SK-N-SH (cell line): ENCODE measurements at regions of chr4 and their contacts with region 1.

Region 1: GRCh38 chr4:42371306-42372252 is 25.7 kb upstream of the SHISA3 start:
- DNase-seq: peak; percentile 77
- H3K4me3 ChIP-seq: no peak overlapping the region
- H3K27ac ChIP-seq: peak overlapping the region in 1 of 2 experiments; percentile 44; a peak in 1 of 4 replicates
- H3K4me1 ChIP-seq: peaks cover 0 to under 1% of the 10 kb centered on the region in 2 experiments; a peak in 1 of 4 replicates
- H3K27me3 ChIP-seq: no peaks in the 10 kb centered on the region; the same call in 1 of the 2 replicates
- CTCF ChIP-seq: peak; percentile 79
- EP300 ChIP-seq: no peak
- RAD21 ChIP-seq: peak; percentile 91

Region 2: GRCh38 chr4:42282081-42282901 is 89.3 kb before region 1 on chr4:
- CTCF ChIA-PET with region 1: interaction called, 86 read pairs
- POLR2A ChIA-PET with region 1: no interaction called
- DNase-seq: peak; percentile 81
- H3K4me3 ChIP-seq: peak overlapping the region in 1 of 2 experiments; percentile 12; a peak in 1 of 4 replicates
- H3K27ac ChIP-seq: peak overlapping the region in 1 of 2 experiments; percentile 36; a peak in 1 of 4 replicates
- H3K4me1 ChIP-seq: peaks cover 0 to 13% of the 10 kb centered on the region in 2 experiments; a peak in 3 of 4 replicates
- H3K27me3 ChIP-seq: no peaks in the 10 kb centered on the region
- CTCF ChIP-seq: peak; percentile 80
- EP300 ChIP-seq: no peak
- RAD21 ChIP-seq: peak; percentile 96

Region 3: GRCh38 chr4:42359711-42360110 is 11.9 kb before region 1 on chr4:
- CTCF ChIA-PET with region 1: interaction called, 22 read pairs
- POLR2A ChIA-PET with region 1: no interaction called
- DNase-seq: no peak
- H3K4me3 ChIP-seq: peak overlapping the region; percentile 1 to 17; a peak in 1 of 4 replicates
- H3K27ac ChIP-seq: peak overlapping the region in 1 of 2 experiments; percentile 77; a peak in 2 of 4 replicates
- H3K4me1 ChIP-seq: peaks cover 0 to 8% of the 10 kb centered on the region in 2 experiments; a peak in 2 of 4 replicates
- H3K27me3 ChIP-seq: no peaks in the 10 kb centered on the region
- CTCF ChIP-seq: no peak
- EP300 ChIP-seq: no peak
- RAD21 ChIP-seq: no peak

Region 4: GRCh38 chr4:42396752-42397634 is 25.4 kb after region 1 on chr4 and contains the start of gene SHISA3:
- CTCF ChIA-PET with region 1: interaction called, 25 read pairs
- POLR2A ChIA-PET with region 1: no interaction called
- DNase-seq: peak; percentile 71
- H3K4me3 ChIP-seq: peak within 1 kb of the TSS; percentile 58 to 60
- H3K27ac ChIP-seq: no peak within 1 kb of the TSS
- H3K4me1 ChIP-seq: peaks cover 0 to 21% of the 10 kb centered on the region in 2 experiments; a peak in 2 of 4 replicates
- H3K27me3 ChIP-seq: peaks cover 23% of the 10 kb centered on the region
- CTCF ChIP-seq: no peak
- EP300 ChIP-seq: no peak
- RAD21 ChIP-seq: no peak
- polyA plus RNA-seq, gene SHISA3: 1.1 and 1.6 TPM in 2 replicates

Region 5: GRCh38 chr4:42513748-42514492 is 142.3 kb after region 1 on chr4:
- CTCF ChIA-PET with region 1: interaction called, 129 read pairs
- POLR2A ChIA-PET with region 1: no interaction called
- DNase-seq: no peak
- H3K4me3 ChIP-seq: no peak overlapping the region
- H3K27ac ChIP-seq: no peak overlapping the region; a peak in 1 of 4 replicates
- H3K4me1 ChIP-seq: no peaks in the 10 kb centered on the region; a peak in 1 of 4 replicates
- H3K27me3 ChIP-seq: no peaks in the 10 kb centered on the region
- CTCF ChIP-seq: no peak
- EP300 ChIP-seq: no peak
- RAD21 ChIP-seq: no peak

Region 6: GRCh38 chr4:42533042-42533441 is 161.5 kb after region 1 on chr4:
- CTCF ChIA-PET with region 1: no interaction called
- POLR2A ChIA-PET with region 1: no interaction called
- DNase-seq: no peak
- H3K4me3 ChIP-seq: no peak overlapping the region
- H3K27ac ChIP-seq: no peak overlapping the region
- H3K4me1 ChIP-seq: no peaks in the 10 kb centered on the region
- H3K27me3 ChIP-seq: no peaks in the 10 kb centered on the region
- CTCF ChIP-seq: no peak
- EP300 ChIP-seq: no peak
- RAD21 ChIP-seq: no peak